Astrocyte of the cerebellum (primary cell): ENCODE measurements at regions of chr3 and their contacts with region 1.

Region 1: GRCh38 chr3:123816673-123817207 is 67.4 kb downstream of the MYLK start:
- DNase-seq: peak; percentile 50
- H3K4me3 ChIP-seq: no peak overlapping the region
- CTCF ChIP-seq: no peak

Region 2: GRCh38 chr3:123632161-123632655 is 184.5 kb before region 1 on chr3:
- in situ Hi-C with region 1: no loop called
- DNase-seq: peak; percentile 33
- H3K4me3 ChIP-seq: no peak overlapping the region
- CTCF ChIP-seq: no peak

Region 3: DNA sequence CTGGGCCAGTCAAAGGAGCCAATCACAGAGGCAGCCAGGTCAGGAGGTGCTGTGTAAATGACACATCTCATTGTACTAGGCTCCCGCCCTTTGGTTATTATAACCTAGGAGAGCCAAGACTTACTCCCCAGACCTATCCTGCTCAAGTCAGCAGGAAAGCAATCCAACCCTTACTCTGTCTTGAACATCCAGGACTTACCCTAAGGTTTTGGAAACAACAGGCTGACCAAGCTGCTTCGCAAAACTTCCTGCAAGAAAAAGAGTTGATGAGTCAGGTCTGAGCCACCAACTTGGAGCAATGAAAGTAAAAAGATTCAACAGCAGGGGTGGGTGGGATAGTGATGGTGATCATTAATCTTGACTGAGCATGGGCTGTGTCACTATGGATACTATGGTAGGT is 77.0 kb before region 1 on chr3:
- in situ Hi-C with region 1: loop called (anchors 5 kb)
- DNase-seq: peak; percentile 53
- H3K4me3 ChIP-seq: no peak overlapping the region
- CTCF ChIP-seq: no peak

Region 4: DNA sequence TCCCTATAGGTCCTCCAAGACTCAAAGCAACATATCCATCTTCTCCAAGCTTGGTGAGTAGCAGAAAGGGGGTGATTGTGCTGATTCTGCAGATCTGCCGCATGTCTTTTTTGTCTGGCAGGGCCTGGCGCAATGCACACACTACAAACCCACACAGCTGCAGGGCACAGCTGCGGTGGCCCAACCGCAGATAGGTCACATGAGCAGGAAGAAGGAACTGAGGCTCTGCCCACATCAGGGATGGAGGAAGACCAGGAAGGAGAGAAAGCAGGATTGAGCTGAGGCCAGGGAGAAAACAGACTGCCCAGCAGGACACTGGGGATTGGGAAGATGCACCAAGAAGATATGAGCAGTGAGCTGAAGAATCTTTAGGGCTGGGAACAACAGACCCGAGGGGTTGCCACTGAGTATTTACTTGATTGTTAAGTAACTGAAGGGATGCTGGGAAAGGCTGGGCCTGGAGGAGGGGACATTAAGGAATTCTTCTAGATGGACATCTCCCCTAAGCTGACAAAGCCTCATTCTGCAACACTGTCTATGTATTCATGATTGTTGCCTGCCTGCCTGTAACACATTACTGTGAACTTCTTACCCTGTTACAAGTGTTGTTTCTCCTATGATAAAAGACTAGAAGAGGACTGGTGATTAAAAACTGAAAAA is 59.3 kb before region 1 on chr3:
- in situ Hi-C with region 1: loop called (anchors 5 kb)
- DNase-seq: no peak
- H3K4me3 ChIP-seq: no peak overlapping the region
- CTCF ChIP-seq: no peak

Region 5: DNA sequence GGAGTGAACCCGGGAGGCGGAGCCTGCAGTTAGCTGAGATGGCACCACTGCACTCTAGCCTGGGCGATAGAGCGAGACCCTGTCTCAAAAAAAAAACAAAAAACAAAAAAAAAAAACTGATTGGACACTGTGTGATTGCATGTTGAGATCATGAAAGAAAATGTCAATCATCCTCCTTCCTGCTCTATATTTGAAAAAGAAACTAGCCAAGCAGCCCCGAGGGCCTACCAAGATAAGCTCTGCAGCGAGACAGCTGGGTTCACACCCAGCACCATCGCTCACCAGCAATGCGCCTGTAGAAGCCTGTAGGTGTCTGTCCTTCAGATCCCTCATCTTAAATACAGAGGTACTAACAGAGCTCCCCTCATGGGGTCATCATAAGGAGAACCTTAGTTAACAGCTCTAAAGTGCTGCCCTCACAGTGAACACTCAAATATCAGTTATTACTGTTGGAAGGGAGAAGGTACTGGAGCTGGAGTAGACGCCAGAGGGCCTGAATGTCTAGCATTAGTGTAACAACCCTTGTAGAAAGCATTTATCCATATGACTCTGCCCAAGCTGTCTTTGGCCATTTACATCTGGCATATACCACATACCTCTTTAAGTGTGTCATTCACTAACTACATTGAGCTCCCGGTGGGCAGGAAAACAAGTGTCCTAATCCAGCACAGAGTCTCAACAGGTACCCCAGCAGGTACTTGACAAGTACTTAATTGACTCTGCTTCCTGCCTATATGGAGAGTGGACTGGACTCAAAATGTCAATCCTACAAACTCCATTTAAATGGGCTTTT is 44.5 kb after region 1 on chr3:
- in situ Hi-C with region 1: loop called (anchors 10 kb)
- DNase-seq: no peak
- H3K4me3 ChIP-seq: no peak overlapping the region
- CTCF ChIP-seq: no peak